ENCODE measurements at regions of chr11 and their contacts with region 1.

Region 1: GRCh38 chr11:32333320-32333991 is 101.9 kb downstream of the WT1 start:
- DNase-seq: peak; percentile 3
- H3K4me3 Mint-ChIP-seq: peak overlapping the region; percentile 49
- H3K27ac Mint-ChIP-seq: no peak overlapping the region
- H3K4me1 Mint-ChIP-seq: no peaks in the 10 kb centered on the region
- H3K27me3 Mint-ChIP-seq: peaks cover 25% of the 10 kb centered on the region

Region 2: DNA sequence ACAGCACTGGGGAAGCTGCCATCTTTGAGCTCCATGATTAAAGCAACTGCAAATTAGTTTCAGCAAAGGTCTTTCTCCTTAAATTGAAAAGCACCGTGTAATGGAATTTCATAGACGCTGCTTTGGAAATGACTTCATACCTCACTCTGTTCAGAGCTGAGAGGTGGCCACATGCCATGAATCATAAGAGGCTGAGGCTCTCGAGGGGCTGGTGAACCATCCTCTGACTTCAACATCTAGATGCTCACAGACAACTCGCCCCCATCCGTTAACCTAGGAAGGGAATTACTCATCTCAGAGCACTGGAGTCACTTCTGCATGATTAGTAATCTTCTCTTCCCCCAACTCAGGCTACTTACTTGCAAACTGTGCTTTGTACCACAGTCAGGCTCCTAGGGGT is 120.2 kb before region 1 on chr11:
- intact Hi-C with region 1: no loop called
- DNase-seq: no peak
- H3K4me3 Mint-ChIP-seq: no peak overlapping the region
- H3K27ac Mint-ChIP-seq: no peak overlapping the region
- H3K4me1 Mint-ChIP-seq: no peaks in the 10 kb centered on the region
- H3K27me3 Mint-ChIP-seq: no peaks in the 10 kb centered on the region

Region 3: GRCh38 chr11:32312865-32313403 is 20.5 kb before region 1 on chr11:
- intact Hi-C with region 1: loop called (anchors 2 kb)
- DNase-seq: no peak
- H3K4me3 Mint-ChIP-seq: no peak overlapping the region
- H3K27ac Mint-ChIP-seq: no peak overlapping the region
- H3K4me1 Mint-ChIP-seq: peaks cover 6% of the 10 kb centered on the region
- H3K27me3 Mint-ChIP-seq: peaks cover under 1% of the 10 kb centered on the region

Region 4: GRCh38 chr11:32435942-32436750 is 102.7 kb after region 1 on chr11:
- intact Hi-C with region 1: loop called (anchors 5 kb)
- DNase-seq: no peak
- H3K4me3 Mint-ChIP-seq: no peak overlapping the region
- H3K27ac Mint-ChIP-seq: peak overlapping the region; percentile 61
- H3K4me1 Mint-ChIP-seq: peaks cover 5% of the 10 kb centered on the region
- H3K27me3 Mint-ChIP-seq: peaks cover 73% of the 10 kb centered on the region

Measured in activated T-helper 1 cell treated with anti-CD3 and anti-CD28 coated beads, Interleukin-12 subunit alpha, Interleukin-12 subunit beta, Interleukin-2, Interleukin-4 antibody, amounts not matched to agents 30 ng/mL and 10 ng/mL and 1 ng/mL, durations not matched to agents 14 hours and 24 hours and 36 hours (primary cell).